Activated B cell treated with CpG ODN at 0.5 μM for 24 hours (primary cell): ENCODE measurements at regions of chr12 and their contacts with region 1.

Region 1: DNA sequence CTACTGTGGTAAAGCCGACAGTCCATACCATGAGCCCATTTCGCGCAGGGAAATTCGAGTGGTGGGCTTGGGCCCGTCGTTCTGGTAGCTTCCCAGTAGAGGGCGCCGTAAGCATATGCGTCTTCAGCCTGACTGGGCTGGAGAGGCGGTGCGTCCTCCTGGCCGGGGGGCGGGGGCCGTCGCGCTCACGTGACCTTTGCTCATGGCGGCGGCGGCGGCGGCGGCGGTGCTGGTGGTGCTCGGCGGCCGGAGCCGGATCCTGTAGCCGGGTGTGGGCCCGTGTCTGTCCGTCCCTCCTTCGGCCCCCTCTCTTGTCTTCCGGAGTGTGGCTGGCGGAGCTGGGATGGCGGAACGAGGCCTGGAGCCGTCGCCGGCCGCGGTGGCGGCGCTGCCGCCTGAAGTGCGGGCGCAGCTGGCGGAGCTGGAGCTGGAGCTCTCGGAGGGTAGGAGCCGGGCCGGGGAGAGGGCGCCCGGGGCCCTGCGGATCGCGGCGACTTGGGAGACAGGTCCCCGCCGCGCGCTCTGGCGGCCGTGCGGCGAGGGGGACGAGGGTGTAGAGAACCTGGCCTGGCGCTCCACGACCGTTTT is at the start of gene DIP2B:
- DNase-seq: peak; percentile 95
- ATAC-seq: peak; percentile 88
- H3K4me3 Mint-ChIP-seq: peak within 1 kb of the TSS; percentile 95
- H3K27ac Mint-ChIP-seq: peak within 1 kb of the TSS; percentile 95
- H3K4me1 Mint-ChIP-seq: peaks cover 48% of the 10 kb centered on the region
- H3K27me3 Mint-ChIP-seq: no peaks in the 10 kb centered on the region
- CTCF ChIP-seq: no peak
- total RNA-seq, gene DIP2B: 32.2 and 32.3 TPM in 2 replicates

Region 2: DNA sequence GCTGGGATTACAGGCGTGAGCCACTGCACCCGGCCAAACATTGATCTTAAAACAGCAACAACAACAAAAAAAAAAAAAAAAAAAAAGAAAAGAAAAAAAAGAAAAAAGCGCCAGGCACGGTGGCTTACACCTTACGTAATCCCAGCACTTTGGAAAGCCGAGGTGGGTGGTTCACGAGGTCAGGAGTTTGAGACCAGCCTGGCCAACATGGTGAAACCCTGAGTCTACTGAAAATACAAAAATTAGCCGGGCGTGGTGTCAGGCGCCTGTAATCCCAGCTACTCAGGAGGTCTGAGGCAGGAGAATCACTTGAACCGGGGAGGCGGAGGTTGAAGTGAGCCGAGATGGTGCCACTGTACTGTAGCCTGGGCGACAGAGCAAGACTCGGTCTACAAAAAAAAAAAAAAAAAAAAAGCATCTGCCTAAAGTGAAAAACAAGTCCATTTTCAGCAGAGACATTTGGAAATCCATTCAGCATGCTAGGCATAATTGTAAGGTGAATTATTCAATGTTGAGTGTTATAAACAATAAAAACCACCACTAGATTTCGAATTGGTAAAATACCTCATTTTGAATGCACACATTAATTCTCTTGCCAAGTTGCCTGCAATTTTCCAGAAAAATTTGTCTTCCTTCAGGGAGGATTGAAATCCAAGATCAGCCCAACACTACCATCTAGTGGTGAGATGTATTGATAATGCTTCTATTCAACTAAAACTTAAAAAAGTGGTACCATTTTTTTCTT is 329.7 kb before region 1 on chr12:
- CTCF ChIA-PET with region 1: no interaction called
- POLR2A ChIA-PET with region 1: no interaction called
- intact Hi-C with region 1: no loop called
- DNase-seq: no peak
- ATAC-seq: no peak
- H3K4me3 Mint-ChIP-seq: no peak overlapping the region
- H3K27ac Mint-ChIP-seq: no peak overlapping the region
- H3K4me1 Mint-ChIP-seq: no peaks in the 10 kb centered on the region
- H3K27me3 Mint-ChIP-seq: no peaks in the 10 kb centered on the region
- CTCF ChIP-seq: peak; percentile 91

Region 3: GRCh38 chr12:50517456-50518048 is 12.7 kb after region 1 on chr12:
- CTCF ChIA-PET with region 1: interaction called, 7 read pairs
- POLR2A ChIA-PET with region 1: interaction called, 35 read pairs
- intact Hi-C with region 1: loop called (anchors 1 kb)
- DNase-seq: no peak
- ATAC-seq: peak; percentile 75
- H3K4me3 Mint-ChIP-seq: no peak overlapping the region
- H3K27ac Mint-ChIP-seq: no peak overlapping the region
- H3K4me1 Mint-ChIP-seq: peaks cover 44% of the 10 kb centered on the region
- H3K27me3 Mint-ChIP-seq: no peaks in the 10 kb centered on the region
- CTCF ChIP-seq: no peak

Region 4: DNA sequence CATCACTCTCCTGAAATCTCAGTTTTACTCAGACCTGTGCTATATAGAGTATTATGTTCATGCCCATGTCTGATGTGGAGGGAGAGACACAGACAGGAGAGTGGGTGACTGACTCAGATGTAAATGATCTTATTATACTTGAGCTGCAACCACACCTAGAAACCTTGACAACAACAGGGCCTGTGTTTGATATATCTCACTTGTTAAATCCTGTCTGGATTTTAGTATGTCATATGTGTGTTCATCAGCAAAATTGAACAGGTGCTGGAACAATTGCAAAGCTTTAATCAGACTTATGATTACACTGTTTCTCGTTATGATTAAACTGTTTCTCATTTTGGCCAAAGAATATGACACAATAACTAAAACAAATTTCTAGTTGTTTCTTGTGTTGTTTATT is 37.6 kb after region 1 on chr12:
- CTCF ChIA-PET with region 1: interaction called, 4 read pairs
- POLR2A ChIA-PET with region 1: interaction called, 3 read pairs
- intact Hi-C with region 1: loop called (anchors 5 kb)
- DNase-seq: no peak
- ATAC-seq: peak; percentile 50
- H3K4me3 Mint-ChIP-seq: no peak overlapping the region
- H3K27ac Mint-ChIP-seq: no peak overlapping the region
- H3K4me1 Mint-ChIP-seq: peaks cover 48% of the 10 kb centered on the region
- H3K27me3 Mint-ChIP-seq: no peaks in the 10 kb centered on the region
- CTCF ChIP-seq: no peak

Region 5: DNA sequence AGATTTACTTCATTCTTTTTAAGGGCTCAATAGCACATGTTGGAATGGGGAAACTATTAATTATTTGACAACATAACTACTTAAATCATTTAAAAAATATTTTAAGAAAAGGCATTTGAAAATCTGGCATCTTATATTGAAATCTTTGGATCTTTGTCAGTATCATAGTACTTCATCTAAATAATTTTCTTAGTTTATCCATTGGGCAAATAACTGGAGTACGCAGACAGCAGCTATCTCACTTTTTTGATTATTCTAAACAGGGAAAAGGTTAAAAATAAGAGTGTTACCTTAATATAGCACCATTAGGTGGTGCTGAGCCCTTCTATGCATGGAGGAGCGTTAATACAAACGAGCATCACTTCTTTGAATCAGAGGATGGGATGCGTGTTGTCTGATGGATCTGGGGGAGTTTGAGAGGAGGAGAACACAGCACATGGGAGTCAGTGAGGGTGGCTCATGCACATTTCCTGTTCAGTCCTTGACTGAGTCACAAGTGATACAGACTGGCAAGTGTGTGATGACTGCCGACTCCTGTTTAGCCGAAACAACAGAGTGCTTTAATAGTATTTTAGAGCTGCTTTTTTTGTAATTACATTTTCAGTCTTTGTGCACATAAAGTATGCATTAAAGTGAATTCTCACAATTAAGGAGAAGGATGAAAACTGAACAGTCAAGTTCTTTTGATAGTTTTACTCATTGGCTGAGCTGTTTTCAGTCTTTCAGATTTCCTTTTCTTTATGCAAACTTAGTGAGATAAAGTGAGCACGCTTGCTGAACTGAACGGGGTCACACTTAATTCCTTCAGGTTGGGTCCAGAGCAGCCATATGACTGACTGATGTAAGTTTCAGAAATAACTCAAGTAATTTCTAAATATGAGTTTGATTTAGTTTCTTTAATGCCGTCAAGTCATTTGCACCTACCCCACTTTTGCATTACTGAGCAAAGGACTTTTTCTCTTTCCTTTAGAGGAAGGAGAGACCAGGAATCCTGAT is 92.6 kb after region 1 on chr12:
- CTCF ChIA-PET with region 1: interaction called, 9 read pairs
- POLR2A ChIA-PET with region 1: interaction called, 7 read pairs
- intact Hi-C with region 1: loop called (anchors 2 kb)
- DNase-seq: no peak
- ATAC-seq: peak; percentile 96
- H3K4me3 Mint-ChIP-seq: peak overlapping the region; percentile 60
- H3K27ac Mint-ChIP-seq: peak overlapping the region; percentile 85
- H3K4me1 Mint-ChIP-seq: peaks cover 49% of the 10 kb centered on the region
- H3K27me3 Mint-ChIP-seq: no peaks in the 10 kb centered on the region
- CTCF ChIP-seq: no peak

Region 6: GRCh38 chr12:50637870-50638481 is 133.1 kb after region 1 on chr12:
- CTCF ChIA-PET with region 1: interaction called, 118 read pairs
- POLR2A ChIA-PET with region 1: interaction called, 24 read pairs
- intact Hi-C with region 1: loop called (anchors 1 kb)
- DNase-seq: no peak
- ATAC-seq: peak; percentile 47
- H3K4me3 Mint-ChIP-seq: no peak overlapping the region
- H3K27ac Mint-ChIP-seq: peak overlapping the region; percentile 26
- H3K4me1 Mint-ChIP-seq: peaks cover 10% of the 10 kb centered on the region
- H3K27me3 Mint-ChIP-seq: no peaks in the 10 kb centered on the region
- CTCF ChIP-seq: no peak

Region 7: DNA sequence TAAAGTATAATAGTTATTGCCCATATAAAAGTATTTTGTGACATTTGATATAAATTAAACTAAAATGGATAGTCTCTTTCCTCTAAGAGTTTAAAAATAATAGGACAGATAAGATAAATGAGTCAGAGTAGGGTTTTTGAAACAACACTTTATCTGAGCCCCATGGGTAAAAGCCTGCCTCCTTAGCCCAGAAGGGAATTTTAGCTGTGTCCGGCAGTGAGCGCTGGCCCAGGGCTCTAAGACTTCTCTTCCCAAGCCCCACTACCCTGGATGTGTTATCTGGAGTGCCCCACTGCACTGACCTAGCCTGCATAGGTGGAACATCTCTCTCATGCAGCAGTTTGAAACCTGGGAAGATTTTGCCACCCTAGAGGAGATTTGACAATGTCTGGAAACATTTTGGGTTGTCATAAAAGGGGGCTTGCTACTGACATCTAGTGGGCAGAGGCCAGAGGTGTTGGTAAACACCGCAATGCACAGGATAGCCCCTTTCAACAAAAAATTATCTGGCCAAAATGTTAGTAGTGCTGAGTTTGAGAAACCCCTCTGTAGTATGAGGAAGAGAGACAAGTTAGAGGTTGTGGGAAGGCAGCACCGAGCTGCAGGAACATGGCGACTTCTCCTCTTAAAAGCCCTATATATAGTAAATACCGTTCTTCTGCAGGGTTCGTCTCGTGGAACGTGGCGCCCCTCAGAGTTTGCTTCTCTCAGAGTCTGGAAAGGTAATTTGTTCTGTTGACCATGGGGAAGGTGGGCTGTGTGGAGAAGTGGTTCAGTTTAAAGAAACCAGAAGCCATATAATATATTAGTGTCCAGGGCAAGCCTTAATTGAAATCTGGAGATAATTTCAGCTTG is 229.7 kb after region 1 on chr12:
- CTCF ChIA-PET with region 1: interaction called, 3 read pairs
- POLR2A ChIA-PET with region 1: interaction called, 3 read pairs
- intact Hi-C with region 1: loop called (anchors 1 kb)
- DNase-seq: no peak
- ATAC-seq: no peak
- H3K4me3 Mint-ChIP-seq: no peak overlapping the region
- H3K27ac Mint-ChIP-seq: no peak overlapping the region
- H3K4me1 Mint-ChIP-seq: no peaks in the 10 kb centered on the region
- H3K27me3 Mint-ChIP-seq: no peaks in the 10 kb centered on the region
- CTCF ChIP-seq: no peak

Region 8: GRCh38 chr12:50986966-50987737 is 482.3 kb after region 1 on chr12:
- CTCF ChIA-PET with region 1: interaction called, 3 read pairs
- POLR2A ChIA-PET with region 1: no interaction called
- intact Hi-C with region 1: loop called (anchors 5 kb)
- DNase-seq: no peak
- ATAC-seq: peak; percentile 72
- H3K4me3 Mint-ChIP-seq: no peak overlapping the region
- H3K27ac Mint-ChIP-seq: no peak overlapping the region
- H3K4me1 Mint-ChIP-seq: peaks cover 5% of the 10 kb centered on the region
- H3K27me3 Mint-ChIP-seq: no peaks in the 10 kb centered on the region
- CTCF ChIP-seq: no peak